Activated T-helper 1 cell treated with anti-CD3 and anti-CD28 coated beads, Interleukin-12 subunit alpha, Interleukin-12 subunit beta, Interleukin-2, Interleukin-4 antibody, amounts not matched to agents 30 ng/mL and 10 ng/mL and 1 ng/mL, durations not matched to agents 14 hours and 24 hours and 36 hours (primary cell): ENCODE measurements at regions of chr3 and their contacts with region 1.

Region 1: DNA sequence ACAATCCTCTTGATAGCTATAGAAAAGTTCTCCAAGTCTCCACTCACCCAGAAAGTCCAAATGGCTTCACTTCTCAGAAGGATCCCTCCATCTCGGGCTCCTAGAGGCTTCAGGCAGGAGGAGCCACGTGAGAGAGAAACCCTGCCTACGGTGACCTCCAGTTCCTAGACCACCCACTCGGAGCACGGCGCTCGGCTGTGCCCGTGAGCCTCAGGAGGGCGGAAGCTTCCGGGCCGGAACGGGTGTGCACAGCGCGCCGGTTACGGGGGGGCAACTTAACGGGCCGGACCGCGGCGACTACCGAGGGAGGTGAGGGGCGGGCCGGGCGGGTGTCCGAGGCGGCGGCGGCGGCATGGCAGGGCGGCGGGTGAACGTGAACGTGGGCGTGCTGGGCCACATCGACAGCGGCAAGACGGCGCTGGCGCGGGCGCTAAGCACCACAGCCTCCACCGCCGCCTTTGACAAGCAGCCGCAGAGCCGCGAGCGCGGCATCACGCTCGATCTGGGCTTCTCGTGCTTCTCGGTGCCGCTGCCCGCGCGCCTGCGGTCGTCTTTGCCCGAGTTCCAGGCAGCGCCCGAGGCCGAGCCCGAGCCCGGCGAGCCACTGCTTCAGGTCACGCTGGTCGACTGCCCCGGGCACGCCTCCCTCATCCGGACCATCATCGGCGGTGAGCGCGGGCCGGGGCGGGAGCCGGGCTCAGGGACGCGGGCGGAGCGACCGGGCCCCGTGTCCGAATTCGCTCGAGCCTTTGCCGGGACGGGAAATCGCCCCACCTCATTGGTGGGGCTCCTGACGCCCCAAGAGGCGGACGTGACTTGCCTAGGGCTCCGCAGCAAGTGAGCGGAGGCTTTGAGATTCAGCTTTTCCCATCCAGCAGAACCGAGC is at the start of gene EEFSEC:
- DNase-seq: peak; percentile 82
- H3K4me3 Mint-ChIP-seq: peak within 1 kb of the TSS; percentile 94
- H3K27ac Mint-ChIP-seq: peak within 1 kb of the TSS; percentile 98
- H3K4me1 Mint-ChIP-seq: peaks cover 31% of the 10 kb centered on the region
- H3K27me3 Mint-ChIP-seq: peaks cover 3% of the 10 kb centered on the region
- total RNA-seq, gene EEFSEC: 18.7 and 19.5 TPM in 2 replicates

Region 2: DNA sequence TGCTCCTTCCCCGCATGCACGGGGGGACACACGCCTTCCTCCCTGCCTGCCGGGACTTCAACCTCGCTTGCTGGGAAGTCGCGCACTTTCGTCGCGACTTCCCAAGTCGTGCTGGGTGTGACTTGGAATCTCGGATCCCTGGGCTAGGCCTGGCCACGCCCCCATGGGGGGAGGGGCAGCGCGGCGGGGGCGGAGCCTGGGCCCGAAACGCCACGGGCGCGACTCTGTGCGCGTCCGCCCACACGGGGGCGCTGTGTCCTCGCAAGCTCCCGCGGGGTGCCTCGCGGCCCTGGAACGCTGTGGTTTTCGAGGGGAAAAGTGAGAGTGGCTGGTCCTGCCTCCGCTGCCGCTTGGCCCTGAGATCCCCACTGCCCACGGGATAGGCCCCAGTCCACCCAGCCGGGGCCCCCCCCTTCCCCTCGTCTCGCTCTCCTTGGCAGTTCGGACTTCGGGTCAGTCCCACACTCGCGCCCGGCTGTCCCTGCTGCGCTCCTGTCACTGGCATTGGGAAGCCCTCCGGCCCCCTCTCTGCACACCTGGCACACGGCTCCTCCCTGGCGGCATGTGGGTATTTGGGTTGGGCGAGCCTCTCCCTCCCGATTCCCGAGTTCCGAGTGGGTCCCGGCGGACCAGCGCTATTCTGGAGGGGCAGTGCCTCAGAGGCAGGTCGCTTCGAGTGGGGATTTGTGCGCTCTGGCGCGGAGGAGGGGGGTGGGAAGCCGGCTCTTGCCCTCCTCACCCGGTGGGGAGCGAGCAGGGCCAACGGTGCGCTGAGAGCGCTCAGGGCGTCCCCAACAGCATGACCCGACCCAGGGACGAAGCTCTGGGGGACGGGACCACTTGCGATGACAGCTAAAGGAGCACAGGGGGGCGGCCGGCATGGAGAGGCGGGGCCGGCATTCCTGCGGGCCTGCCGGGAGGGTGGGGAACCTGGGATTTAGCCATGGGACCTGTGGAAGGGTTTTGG is 77.6 kb before region 1 on chr3:
- intact Hi-C with region 1: loop called (anchors 1 kb)
- DNase-seq: peak; percentile 76
- H3K4me3 Mint-ChIP-seq: peak overlapping the region; percentile 62
- H3K27ac Mint-ChIP-seq: no peak overlapping the region
- H3K4me1 Mint-ChIP-seq: peaks cover 7% of the 10 kb centered on the region
- H3K27me3 Mint-ChIP-seq: peaks cover 10% of the 10 kb centered on the region

Region 3: GRCh38 chr3:128190501-128190900 is 37.1 kb after region 1 on chr3:
- intact Hi-C with region 1: no loop called
- DNase-seq: no peak
- H3K4me3 Mint-ChIP-seq: no peak overlapping the region
- H3K27ac Mint-ChIP-seq: no peak overlapping the region
- H3K4me1 Mint-ChIP-seq: no peaks in the 10 kb centered on the region
- H3K27me3 Mint-ChIP-seq: no peaks in the 10 kb centered on the region

Region 4: DNA sequence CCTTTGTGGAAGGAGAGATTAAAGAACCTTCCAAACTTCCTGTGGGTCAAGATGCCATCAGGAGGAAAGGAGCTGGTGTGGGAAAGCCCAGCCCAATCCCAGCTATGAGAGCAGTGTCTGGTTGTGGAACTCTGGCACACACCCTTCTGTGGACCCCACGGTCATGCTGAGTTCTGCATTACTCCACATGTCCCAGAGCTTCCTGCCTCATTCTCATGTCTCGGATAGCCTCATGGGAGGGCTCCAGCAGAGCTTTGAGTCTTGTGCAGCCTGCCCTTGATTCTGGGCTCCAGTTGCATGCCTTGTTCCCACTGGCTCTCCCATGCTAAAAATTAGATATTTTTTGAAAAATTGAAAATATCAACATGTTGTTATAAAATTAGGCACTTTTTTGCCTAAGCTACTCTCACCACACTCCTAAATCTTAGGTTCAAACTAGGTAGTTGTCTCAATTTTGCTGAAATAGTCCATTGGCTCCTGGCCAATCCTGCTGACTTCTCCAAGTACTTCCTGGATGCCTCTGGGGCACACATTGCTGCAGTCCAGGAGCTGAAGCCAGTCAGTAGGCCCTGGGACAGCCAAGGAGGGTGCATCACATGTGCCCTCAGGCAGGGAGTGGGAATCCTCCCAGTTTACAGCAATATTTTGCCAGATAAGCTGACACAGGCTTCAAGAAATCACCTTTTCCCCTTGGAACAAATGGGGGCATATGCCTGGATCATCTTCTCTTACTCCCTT is 144.2 kb after region 1 on chr3:
- intact Hi-C with region 1: no loop called
- DNase-seq: no peak
- H3K4me3 Mint-ChIP-seq: no peak overlapping the region
- H3K27ac Mint-ChIP-seq: no peak overlapping the region
- H3K4me1 Mint-ChIP-seq: peaks cover 20% of the 10 kb centered on the region
- H3K27me3 Mint-ChIP-seq: no peaks in the 10 kb centered on the region

Region 5: DNA sequence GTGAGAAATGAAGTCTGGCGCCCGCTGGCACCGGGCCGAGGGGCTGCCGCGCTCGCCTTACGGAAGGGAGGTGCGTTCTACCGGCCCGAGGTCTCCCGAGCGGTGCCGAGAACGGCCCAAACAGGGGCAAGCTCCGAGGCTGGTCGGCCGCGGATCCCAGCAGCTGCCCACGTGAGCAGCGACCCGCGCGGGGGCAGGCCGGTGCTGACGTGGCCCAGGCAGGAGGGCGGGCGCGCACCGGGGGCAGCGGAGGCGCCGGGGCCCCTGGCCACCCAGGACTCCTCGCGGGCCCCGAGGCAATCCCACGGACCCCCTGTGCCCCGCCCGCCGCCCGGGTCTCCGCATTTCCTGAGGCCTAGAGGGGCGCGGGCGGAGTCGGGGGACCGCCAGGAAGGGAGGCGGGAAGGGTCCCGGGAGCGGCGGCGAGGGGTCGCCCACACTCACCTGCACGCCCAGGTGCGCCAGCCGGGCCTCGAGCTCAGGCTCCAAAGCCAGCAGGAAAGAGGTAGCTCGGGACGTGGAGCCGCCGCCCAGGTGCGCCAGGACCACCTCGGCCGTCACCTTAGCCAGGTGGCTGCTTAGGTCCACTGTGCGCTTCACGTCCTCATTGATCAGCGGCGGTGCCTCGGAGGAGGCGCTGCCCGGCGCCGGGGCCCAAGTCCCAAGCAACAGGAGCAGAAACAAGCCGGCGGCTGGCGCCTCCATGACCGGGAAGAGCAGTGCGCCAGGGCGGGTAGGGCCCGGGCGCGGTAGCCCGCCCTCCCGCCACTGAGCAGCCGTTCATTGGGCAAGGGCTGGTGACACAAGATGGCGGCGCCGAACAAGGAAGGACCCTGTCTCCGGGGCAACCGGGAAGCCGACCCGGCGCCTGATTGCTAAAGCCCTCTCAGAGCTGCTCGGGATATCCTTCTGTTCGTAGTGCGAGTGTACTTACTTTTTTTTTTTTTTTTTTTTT is 497.0 kb after region 1 on chr3 and contains the start of gene RPN1:
- intact Hi-C with region 1: loop called (anchors 5 kb)
- DNase-seq: peak; percentile 94
- H3K4me3 Mint-ChIP-seq: peak within 1 kb of the TSS; percentile 90
- H3K27ac Mint-ChIP-seq: peak within 1 kb of the TSS; percentile 92
- H3K4me1 Mint-ChIP-seq: peaks cover 26% of the 10 kb centered on the region
- H3K27me3 Mint-ChIP-seq: no peaks in the 10 kb centered on the region
- total RNA-seq, gene RPN1: 190 and 194 TPM in 2 replicates